Activated CD4-positive, alpha-beta T cell treated with anti-CD3 and anti-CD28 coated beads, Interleukin-2, amount 10 ng/mL, durations not matched to agents 7 days and 5 days (primary cell): ENCODE measurements at regions of chrX and their contacts with region 1.

Region 1: GRCh38 chrX:40651620-40652223 is 4.4 kb upstream of the CXorf38 start:
- DNase-seq: peak; percentile 78
- H3K4me3 Mint-ChIP-seq: no peak overlapping the region
- H3K27ac Mint-ChIP-seq: no peak overlapping the region
- H3K4me1 Mint-ChIP-seq: peaks cover 5% of the 10 kb centered on the region
- H3K27me3 Mint-ChIP-seq: no peaks in the 10 kb centered on the region

Region 2: DNA sequence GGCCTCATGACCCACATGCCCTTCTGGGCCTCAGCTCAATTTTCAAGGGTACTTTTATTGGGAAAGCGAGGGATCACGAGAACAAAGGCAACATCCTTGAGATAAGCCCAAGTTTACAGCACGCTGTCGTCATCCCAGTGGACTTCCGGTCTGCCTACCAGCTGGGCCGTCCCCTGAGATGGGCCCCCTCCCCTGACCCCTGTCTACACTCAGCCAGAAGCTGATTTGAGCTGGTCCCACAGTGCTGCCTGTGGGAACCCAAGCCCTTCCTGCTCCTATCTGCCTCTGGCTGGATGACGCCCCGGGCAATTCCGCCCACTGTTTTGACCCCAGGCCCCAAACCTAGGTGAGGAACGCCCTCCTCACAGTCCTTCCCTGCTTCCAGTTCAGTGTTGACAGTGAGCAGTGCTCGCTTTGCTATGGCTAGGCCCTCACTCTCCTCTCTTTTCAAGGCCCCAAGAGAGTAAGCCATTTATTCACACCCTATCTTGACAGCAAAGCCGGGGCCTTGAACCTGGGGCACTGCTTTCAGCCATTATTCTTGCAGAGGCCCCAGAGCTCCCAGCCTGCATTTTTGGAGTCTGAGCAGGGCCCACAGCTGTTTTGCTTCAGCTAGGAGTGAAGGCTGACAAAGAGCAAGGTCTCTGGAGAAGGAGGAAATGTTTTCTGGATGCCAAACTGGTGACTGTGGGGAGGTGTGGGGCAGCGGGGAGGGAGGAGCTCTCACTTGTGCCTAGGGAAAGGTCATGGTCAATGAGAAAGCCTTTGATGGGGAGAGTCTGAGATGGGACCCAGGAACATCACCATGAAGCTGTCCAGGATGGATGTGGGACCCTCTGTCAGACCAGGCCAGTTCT is 389.3 kb before region 1 on chrX:
- CTCF ChIA-PET with region 1: no interaction called
- POLR2A ChIA-PET with region 1: no interaction called
- DNase-seq: no peak
- H3K4me3 Mint-ChIP-seq: no peak overlapping the region
- H3K27ac Mint-ChIP-seq: no peak overlapping the region
- H3K4me1 Mint-ChIP-seq: peaks cover 17% of the 10 kb centered on the region
- H3K27me3 Mint-ChIP-seq: no peaks in the 10 kb centered on the region

Region 3: DNA sequence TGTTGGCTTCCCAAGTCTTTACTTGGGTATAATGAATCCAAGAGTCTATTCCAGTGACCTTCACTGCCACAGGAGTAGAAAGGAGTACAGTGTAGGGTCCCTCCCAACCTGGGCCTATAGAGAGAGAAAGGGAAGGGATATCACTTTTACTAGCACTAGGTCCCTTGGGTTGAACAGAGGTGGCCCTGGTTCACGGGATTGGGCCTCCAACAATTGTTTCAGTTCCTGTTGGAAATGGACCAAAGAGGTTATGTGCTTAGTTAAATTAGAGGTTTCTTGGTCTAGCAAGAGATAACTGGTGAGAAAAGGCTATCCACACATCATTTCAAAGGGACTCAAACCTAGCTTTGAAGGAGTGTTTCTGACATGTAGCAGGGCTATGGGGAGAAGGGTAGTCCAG is 140.7 kb after region 1 on chrX:
- CTCF ChIA-PET with region 1: interaction called, 10 read pairs
- POLR2A ChIA-PET with region 1: no interaction called
- DNase-seq: no peak
- H3K4me3 Mint-ChIP-seq: no peak overlapping the region
- H3K27ac Mint-ChIP-seq: no peak overlapping the region
- H3K4me1 Mint-ChIP-seq: peaks cover 6% of the 10 kb centered on the region
- H3K27me3 Mint-ChIP-seq: peaks cover 5% of the 10 kb centered on the region